ENCODE measurements at regions of chr22 and their contacts with region 1.

Region 1: GRCh38 chr22:28855355-28856094 is 27.8 kb upstream of the ZNRF3 start:
- DNase-seq: no peak
- ATAC-seq: peak; percentile 91
- H3K4me3 ChIP-seq: no peak overlapping the region
- H3K27ac ChIP-seq: no peak overlapping the region
- H3K4me1 ChIP-seq: no peaks in the 10 kb centered on the region
- H3K27me3 ChIP-seq: no peaks in the 10 kb centered on the region
- CTCF ChIP-seq: peak; percentile 93

Region 2: DNA sequence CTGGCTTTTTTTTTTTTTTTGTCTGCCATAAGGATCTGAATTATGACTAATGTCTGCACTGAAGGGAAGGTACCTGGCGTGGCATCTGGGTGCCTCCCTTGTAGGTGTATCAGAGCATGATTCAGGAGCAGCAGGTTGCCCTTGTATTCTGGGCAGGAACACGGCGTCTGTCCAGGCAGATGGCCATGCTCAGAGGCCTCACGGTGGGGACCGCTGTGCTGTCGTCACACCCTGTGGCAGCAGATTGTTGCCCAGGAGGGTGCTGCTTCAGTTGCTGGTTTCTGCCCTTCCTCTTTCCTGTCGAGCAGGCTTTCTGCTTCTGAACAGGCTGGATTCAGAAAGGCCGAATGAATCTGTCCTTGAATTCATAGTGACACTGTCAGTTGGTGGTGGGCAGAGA is 38.8 kb after region 1 on chr22:
- intact Hi-C with region 1: no loop called
- DNase-seq: no peak
- ATAC-seq: peak; percentile 45
- H3K4me3 ChIP-seq: no peak overlapping the region
- H3K27ac ChIP-seq: no peak overlapping the region
- H3K4me1 ChIP-seq: peaks cover 19% of the 10 kb centered on the region
- H3K27me3 ChIP-seq: no peaks in the 10 kb centered on the region
- CTCF ChIP-seq: no peak

Region 3: DNA sequence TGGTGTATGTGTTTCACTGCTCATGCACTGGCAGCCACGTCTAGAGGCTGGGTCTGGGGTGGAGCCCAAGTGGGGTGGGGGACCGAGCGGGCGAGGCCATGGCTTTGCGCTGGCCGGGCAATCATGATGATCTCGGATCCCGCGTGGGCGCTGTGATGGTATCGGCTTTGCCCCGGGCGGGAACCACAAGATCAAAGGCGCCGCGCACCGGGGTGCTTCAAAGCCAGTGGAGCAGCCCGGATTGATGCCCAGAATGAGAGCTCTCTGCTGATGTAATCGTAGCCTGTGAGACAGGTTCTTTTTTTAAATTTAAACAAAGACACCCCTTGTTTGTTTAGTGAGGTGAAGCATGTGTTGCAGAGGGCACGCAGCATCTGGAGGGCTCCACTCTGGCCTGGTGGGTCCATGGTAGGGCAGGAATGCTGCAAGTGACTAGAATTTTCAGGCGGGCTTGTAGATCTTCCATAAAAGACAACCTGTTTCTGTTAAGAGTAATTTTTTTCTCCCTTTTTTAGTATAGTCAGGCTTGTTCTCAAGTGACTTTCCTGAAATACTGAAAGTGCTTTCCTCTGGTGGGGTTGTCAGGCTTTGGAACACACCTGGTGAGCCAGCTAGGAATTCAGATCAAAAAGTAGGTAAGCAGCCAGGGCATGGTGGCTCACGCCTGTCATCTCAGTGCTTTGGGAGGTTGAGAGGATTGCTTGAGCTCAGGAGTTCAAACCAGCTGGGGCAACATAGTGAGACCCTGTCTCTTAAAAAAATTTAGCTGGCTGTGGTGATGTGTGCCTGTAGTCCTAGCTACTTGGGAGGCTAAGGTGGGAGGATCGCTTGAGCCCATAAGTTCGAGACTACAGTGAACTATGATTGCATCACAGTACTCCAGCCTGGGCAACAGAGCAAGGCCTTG is 68.6 kb after region 1 on chr22:
- intact Hi-C with region 1: no loop called
- DNase-seq: peak; percentile 86
- ATAC-seq: peak; percentile 77
- H3K4me3 ChIP-seq: no peak overlapping the region
- H3K27ac ChIP-seq: peak overlapping the region; percentile 32
- H3K4me1 ChIP-seq: peaks cover 25% of the 10 kb centered on the region
- H3K27me3 ChIP-seq: no peaks in the 10 kb centered on the region
- CTCF ChIP-seq: no peak

Region 4: DNA sequence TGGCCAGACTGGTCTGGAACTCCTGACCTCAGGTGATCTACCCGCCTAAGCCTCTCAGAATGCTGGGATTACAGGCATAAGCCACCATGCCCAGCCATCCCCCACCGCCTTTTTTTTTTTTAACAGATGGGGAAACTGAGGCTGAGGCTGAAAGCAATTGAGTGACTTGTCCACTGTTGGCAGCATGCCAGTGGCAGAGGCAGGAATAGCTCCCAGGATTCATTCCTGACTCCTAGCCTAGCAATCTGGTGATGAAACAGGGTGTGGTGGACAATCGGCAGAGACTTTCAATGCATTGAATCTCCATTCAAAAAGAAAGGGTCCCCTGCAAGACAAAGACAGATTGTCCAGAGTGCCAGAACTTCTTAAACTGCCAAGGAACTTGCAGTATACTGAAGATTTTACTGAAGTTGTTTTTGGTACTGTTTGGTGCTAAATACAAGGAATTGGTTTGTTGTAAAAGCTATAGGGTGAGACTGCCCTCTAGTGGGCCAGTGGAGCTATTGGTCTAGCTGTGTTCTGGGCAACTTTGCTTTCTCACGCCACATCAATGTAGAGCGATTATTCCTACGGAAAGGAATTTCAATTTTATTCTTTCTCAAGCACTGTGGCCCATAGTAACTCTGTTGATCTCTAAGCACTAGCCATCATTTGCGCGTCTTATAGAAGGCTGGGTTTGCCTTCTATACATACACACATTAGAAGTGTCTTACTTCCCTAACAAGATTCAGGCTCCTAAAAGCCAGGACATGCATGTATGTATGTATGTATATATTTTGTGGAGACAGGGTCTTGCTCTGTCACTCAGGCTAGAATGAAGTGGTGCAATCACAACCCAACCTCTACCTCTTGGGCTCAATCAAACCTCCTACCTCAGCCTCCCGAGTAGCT is 185.1 kb after region 1 on chr22:
- intact Hi-C with region 1: loop called (anchors 5 kb)
- DNase-seq: no peak
- ATAC-seq: peak; percentile 92
- H3K4me3 ChIP-seq: no peak overlapping the region
- H3K27ac ChIP-seq: no peak overlapping the region
- H3K4me1 ChIP-seq: peaks cover 21% of the 10 kb centered on the region
- H3K27me3 ChIP-seq: no peaks in the 10 kb centered on the region
- CTCF ChIP-seq: peak; percentile 99